Activated CD4-positive, alpha-beta T cell treated with anti-CD3 and anti-CD28 coated beads for 36 hours (primary cell): ENCODE measurements at regions of chr17 and their contacts with region 1.

Region 1: GRCh38 chr17:75749545-75750389 is 15.2 kb downstream of the GALK1 start:
- DNase-seq: peak; percentile 95
- ATAC-seq: peak; percentile 75
- H3K4me3 Mint-ChIP-seq: no peak overlapping the region
- H3K27ac Mint-ChIP-seq: no peak overlapping the region
- H3K4me1 Mint-ChIP-seq: peaks cover 18% of the 10 kb centered on the region
- H3K27me3 Mint-ChIP-seq: no peaks in the 10 kb centered on the region

Region 2: GRCh38 chr17:75144816-75145512 is 604.8 kb before region 1 on chr17:
- CTCF ChIA-PET with region 1: no interaction called
- POLR2A ChIA-PET with region 1: no interaction called
- intact Hi-C with region 1: no loop called
- DNase-seq: no peak
- ATAC-seq: no peak
- H3K4me3 Mint-ChIP-seq: no peak overlapping the region
- H3K27ac Mint-ChIP-seq: no peak overlapping the region
- H3K4me1 Mint-ChIP-seq: peaks cover 15% of the 10 kb centered on the region
- H3K27me3 Mint-ChIP-seq: no peaks in the 10 kb centered on the region

Region 3: DNA sequence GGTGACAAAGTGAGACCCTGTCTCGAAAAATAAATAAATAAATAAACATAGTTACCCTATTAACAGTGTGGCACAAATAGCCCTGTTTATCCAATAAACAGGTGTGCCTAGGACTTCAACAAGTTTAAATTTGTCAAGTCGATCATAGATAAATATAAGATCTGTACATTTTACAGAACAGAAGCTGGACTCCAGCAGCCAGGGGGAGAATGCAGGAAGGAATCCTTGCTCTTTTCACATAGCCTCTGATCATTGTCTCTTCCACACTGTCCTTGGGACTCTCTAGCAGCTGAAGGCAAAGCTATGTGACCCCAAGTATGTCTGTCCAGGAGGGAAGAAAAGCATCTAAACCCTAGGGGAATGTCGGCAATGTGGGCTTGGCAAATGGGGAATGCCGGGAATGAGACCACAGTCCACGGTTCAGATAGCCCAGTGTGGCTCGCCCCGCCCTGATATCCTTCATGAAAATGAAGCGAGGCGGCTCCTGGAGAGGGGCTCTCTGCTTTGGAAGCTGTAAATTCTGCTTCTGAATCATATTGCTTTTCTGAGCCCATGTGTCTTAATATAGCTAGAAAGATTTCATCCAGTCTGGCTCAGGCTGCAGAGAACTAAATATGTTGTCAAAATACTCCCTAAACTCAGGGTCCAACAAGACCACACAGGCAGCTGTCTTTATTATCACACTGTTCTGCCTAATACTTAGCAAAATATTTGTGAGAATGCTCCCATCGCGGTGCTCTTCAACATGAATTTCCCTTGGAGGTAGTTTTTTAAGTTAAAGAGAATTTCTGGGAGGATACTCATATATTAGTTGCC is 319.4 kb before region 1 on chr17:
- CTCF ChIA-PET with region 1: interaction called, 4 read pairs
- POLR2A ChIA-PET with region 1: no interaction called
- intact Hi-C with region 1: loop called (anchors 1 kb)
- DNase-seq: no peak
- ATAC-seq: no peak
- H3K4me3 Mint-ChIP-seq: no peak overlapping the region
- H3K27ac Mint-ChIP-seq: no peak overlapping the region
- H3K4me1 Mint-ChIP-seq: peaks cover 16% of the 10 kb centered on the region
- H3K27me3 Mint-ChIP-seq: peaks cover 5% of the 10 kb centered on the region

Region 4: DNA sequence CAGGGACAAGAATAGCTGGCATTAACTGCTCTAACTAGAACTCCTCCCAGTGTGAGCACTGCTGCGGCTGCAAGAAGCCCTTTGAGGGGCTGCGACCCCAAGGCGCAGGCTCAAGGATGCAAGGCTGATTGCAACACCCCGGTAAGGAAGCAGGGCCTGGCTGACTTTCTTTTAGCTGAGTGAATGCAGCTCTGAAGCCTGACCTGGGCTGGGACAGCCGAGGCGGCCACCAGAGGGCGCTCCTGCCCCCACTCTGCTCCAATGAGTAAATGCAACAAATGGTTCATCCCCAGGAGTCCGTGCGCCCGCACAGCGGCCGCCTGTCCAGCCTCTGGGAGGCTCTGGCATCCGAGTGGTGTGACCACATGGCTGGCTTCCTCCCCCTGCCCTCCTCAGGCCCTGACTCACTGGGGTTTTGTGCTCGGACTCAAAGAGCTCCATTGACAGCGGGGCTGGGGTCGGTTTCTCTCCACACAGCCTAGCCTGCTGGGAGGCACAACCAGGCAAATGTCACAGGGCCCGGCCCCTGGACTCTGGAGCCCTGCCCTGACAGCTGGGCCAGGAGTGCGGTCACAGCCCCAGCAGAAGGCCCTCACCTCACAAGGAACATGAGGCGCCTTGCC is 116.8 kb before region 1 on chr17 and contains the start of gene SMIM5:
- CTCF ChIA-PET with region 1: interaction called, 242 read pairs
- POLR2A ChIA-PET with region 1: interaction called, 7 read pairs
- intact Hi-C with region 1: loop called (anchors 1 kb)
- DNase-seq: peak; percentile 92
- ATAC-seq: peak; percentile 93
- H3K4me3 Mint-ChIP-seq: no peak within 1 kb of the TSS
- H3K27ac Mint-ChIP-seq: no peak within 1 kb of the TSS
- H3K4me1 Mint-ChIP-seq: peaks cover 5% of the 10 kb centered on the region
- H3K27me3 Mint-ChIP-seq: no peaks in the 10 kb centered on the region
- total RNA-seq, gene SMIM5: 0.12 to 0.14 TPM

Region 5: DNA sequence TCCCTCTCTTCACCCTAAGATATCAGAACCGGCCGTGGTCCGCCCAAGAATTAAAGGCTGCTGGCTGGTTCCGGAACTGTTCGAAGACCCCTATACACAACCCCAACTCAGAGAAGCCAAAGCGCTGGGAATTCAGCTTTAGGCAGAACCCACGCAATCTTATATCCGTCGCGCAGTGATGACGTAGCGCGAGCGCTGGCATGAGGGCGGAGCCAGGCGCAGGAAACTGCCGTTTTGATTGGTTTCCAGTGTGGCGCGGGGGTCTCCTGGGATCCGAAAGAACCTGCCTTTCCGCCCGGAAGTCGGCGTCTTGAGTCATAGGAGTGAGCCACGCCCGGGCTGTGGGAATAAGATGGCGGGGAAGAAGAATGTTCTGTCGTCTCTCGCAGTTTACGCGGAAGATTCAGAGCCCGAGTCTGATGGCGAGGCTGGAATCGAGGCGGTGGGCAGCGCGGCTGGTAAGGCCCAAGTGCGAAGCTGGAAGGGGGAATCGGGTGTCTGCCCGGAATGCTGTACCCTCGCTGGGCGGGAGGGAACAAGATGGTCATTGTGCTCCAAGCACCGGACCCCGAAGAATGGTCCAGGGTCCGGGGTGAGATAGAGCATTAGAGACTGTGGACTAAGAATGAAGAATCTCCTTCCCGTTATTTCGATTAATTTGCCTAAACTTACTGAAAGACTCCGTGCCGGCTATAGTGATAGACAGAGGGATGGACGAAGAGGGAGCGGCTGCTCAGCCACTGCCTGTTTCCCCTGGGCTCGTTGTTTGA is 82.6 kb before region 1 on chr17 and contains the starts of genes RECQL5 and SAP30BP:
- CTCF ChIA-PET with region 1: interaction called, 140 read pairs
- POLR2A ChIA-PET with region 1: no interaction called
- intact Hi-C with region 1: no loop called
- DNase-seq: peak; percentile 99
- ATAC-seq: peak; percentile 100
- H3K4me3 Mint-ChIP-seq: no peak within 1 kb of the TSS
- H3K27ac Mint-ChIP-seq: no peak within 1 kb of the TSS
- H3K4me1 Mint-ChIP-seq: peaks cover 34% of the 10 kb centered on the region
- H3K27me3 Mint-ChIP-seq: no peaks in the 10 kb centered on the region
- total RNA-seq, gene RECQL5: 36.4 to 40.5 TPM
- total RNA-seq, gene SAP30BP: 87.8 to 100.0 TPM

Region 6: GRCh38 chr17:75693500-75694481 is 56.0 kb before region 1 on chr17:
- CTCF ChIA-PET with region 1: interaction called, 26 read pairs
- POLR2A ChIA-PET with region 1: interaction called, 12 read pairs
- intact Hi-C with region 1: no loop called
- DNase-seq: no peak
- ATAC-seq: no peak
- H3K4me3 Mint-ChIP-seq: no peak overlapping the region
- H3K27ac Mint-ChIP-seq: no peak overlapping the region
- H3K4me1 Mint-ChIP-seq: peaks cover 35% of the 10 kb centered on the region
- H3K27me3 Mint-ChIP-seq: no peaks in the 10 kb centered on the region

Region 7: DNA sequence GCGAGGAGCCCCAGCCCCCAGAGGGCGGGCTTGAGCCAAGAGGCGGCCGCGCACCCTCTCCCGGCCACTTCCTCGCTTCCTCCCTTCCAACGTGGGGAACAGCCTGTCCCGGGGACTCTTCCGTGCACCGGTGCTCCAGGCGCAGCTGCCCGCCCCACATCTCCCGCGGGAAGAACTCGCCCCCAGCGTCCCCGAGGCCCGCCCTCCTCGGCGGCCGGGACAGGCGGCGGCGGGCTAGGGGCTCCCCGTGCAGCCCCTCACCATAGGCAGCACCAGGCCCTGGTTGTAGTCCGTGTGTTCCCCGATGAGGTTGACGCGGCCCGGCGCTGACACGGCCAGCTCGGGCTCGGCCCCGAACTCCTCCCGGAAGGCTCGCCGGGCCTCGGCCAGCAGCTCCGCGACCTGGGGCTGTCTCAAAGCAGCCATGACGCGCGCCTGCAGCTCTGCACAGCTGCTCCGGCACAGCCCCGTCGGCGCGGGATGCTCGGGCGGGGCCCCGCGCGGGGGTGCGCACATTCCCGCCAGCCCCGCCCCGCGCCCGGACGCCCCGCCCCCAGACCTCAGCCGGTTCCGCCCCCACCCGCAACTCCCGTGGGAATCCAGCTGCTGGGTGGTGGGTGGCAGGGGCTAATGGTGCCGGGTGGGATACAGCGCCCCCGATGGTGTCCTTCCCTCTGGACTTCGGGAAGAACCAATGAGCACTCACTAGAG is 15.1 kb after region 1 on chr17 and contains the start of gene GALK1:
- CTCF ChIA-PET with region 1: interaction called, 76 read pairs
- POLR2A ChIA-PET with region 1: interaction called, 4 read pairs
- intact Hi-C with region 1: no loop called
- DNase-seq: peak; percentile 90
- ATAC-seq: peak; percentile 95
- H3K4me3 Mint-ChIP-seq: peak within 1 kb of the TSS; percentile 80
- H3K27ac Mint-ChIP-seq: peak within 1 kb of the TSS; percentile 83
- H3K4me1 Mint-ChIP-seq: peaks cover 3% of the 10 kb centered on the region
- H3K27me3 Mint-ChIP-seq: no peaks in the 10 kb centered on the region
- total RNA-seq, gene GALK1: 50.3 to 63.2 TPM

Region 8: DNA sequence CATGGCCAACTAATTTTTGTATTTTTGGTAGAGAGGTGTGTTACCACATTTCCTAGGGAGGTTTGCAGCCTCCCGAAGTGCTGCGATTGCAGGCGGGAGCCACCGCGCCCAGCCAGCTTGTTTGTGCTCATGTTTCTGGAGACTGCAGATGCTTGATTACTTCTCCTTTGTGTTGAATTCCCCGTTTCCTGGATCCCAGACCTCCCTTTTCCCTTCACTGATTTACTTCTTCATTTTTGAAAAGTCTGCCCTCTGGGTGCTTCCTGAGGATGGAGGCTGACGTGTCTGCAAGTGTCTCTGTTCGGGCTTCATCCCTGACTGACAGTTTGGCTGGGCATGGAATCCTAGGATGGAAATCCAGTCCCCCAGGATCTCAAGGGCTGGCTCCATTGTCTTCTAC is 135.7 kb after region 1 on chr17:
- CTCF ChIA-PET with region 1: no interaction called
- POLR2A ChIA-PET with region 1: no interaction called
- intact Hi-C with region 1: no loop called
- DNase-seq: no peak
- ATAC-seq: no peak
- H3K4me3 Mint-ChIP-seq: no peak overlapping the region
- H3K27ac Mint-ChIP-seq: no peak overlapping the region
- H3K4me1 Mint-ChIP-seq: no peaks in the 10 kb centered on the region
- H3K27me3 Mint-ChIP-seq: no peaks in the 10 kb centered on the region